Brain microvascular endothelial cell (primary cell): ENCODE measurements at regions of chr4 and their contacts with region 1.

Region 1: DNA sequence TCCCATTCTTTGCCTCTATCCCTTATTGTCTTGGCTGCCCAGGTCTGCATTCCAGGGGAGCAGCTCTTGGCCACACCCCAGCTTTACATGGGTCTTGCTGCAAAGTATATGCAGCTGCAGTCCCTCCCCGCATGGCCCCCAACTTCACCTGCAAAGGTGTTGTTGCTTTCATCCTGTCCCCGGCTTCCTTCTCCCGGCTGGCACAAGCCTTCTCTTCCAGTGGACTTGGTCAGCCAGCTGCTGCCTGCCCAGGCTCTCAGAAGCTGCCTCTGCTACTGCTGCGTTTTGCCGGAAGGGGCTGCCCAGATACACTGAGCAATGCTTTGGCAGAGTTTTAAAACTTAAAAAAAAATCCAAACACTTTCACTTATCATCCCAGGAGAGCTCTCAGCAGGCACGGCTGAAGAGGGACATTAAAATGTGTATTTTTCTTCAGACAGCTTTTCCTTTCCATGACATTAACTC is 121.2 kb upstream of the PDLIM3 start:
- DNase-seq: peak; percentile 66
- H3K4me3 ChIP-seq: peak overlapping the region; percentile 47
- H3K27ac ChIP-seq: peak overlapping the region; percentile 19
- H3K27me3 ChIP-seq: no peaks in the 10 kb centered on the region
- CTCF ChIP-seq: peak; percentile 84

Region 2: DNA sequence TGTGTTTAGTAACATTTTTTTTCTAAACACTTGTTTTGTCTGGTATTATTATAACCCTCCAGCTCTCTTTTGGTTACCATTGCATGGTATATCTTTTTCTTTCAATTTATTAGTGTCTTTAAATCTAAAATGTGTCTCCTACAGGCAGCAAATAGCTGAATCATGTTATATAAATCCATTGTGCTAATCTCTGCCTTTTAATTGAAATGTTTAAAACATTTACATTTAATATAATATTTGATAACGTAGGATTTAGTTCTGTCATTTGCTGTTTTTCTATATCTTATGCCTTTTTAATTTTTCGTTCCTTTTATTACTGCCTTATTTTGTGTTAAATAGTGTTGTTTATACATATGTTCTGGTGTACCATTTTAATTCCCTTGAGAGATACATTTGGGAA is 167.8 kb before region 1 on chr4:
- in situ Hi-C with region 1: no loop called
- DNase-seq: no peak
- H3K4me3 ChIP-seq: no peak overlapping the region
- H3K27ac ChIP-seq: no peak overlapping the region
- H3K27me3 ChIP-seq: no peaks in the 10 kb centered on the region
- CTCF ChIP-seq: no peak

Region 3: DNA sequence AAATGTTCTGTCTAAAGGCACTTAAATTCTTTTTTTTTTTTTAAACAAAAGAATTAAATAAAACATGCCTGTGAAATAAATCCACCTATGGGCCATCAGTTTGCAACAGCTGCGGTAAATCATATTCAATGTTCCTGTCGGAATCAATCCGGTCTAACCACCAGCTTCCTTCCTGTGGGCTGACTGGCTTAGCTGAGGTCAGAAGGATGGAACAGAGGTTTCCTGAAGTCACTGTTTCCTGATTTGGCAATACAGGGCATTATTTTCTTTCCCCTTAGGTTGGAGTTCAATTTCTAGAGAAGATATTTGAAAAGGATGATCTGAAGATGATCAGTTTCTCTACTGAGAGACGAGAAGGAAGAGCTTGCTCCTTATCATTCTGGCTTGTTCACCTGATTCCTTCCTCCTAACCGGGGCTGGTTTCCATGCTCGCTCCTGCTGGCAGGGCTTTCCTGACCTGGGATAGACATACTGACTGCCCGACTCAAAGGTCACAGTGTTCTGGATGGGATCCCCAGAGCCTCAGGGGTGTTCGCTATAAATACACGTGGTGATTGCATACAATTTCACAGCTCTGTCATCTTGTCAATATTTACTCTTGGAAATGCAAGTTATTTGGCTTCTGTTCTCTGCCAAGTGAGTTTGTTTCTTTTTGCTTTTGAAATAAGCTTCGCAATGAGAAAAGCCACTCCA is 142.9 kb before region 1 on chr4:
- in situ Hi-C with region 1: no loop called
- DNase-seq: peak; percentile 55
- H3K4me3 ChIP-seq: no peak overlapping the region
- H3K27ac ChIP-seq: no peak overlapping the region
- H3K27me3 ChIP-seq: no peaks in the 10 kb centered on the region
- CTCF ChIP-seq: no peak

Region 4: DNA sequence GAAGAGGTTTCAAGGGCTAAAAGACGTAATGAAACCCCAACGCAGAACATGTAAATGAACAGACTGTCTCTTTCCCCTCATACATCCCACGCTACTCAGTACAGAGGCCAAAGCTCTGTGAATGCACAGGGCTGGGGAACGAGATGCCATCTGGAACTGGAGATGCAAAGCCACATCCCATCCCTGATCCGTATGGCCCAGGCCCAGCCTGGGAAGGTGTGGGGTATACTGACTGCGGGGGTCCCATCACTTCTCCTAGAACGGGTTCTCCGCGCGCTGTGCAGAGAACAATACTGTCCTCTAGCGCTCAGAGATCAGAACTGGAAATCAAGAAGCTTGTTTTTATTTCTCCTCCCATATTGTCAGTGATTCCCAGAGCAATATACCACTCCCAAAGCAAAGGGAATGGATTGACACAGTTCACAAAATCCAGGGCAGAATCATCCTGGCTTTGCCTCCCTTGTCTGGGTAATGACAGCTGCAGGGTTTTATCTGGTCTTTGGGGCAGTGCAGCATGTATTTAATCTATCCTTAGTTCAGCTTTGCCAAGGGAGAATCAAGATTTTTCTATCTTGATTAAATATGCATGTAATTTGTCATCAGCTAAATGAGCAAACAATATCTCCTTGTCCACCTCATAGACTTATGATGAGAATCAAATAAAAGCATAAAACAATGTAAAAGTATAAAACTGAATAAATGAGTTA is 365.1 kb after region 1 on chr4:
- in situ Hi-C with region 1: loop called (anchors 25 kb)
- DNase-seq: peak; percentile 69
- H3K4me3 ChIP-seq: peak overlapping the region; percentile 34
- H3K27ac ChIP-seq: peak overlapping the region; percentile 59
- H3K27me3 ChIP-seq: no peaks in the 10 kb centered on the region
- CTCF ChIP-seq: peak; percentile 93